Transverse colon (tissue), 4 donors: ENCODE measurements at regions of chr7 and their contacts with region 1.

Region 1: DNA sequence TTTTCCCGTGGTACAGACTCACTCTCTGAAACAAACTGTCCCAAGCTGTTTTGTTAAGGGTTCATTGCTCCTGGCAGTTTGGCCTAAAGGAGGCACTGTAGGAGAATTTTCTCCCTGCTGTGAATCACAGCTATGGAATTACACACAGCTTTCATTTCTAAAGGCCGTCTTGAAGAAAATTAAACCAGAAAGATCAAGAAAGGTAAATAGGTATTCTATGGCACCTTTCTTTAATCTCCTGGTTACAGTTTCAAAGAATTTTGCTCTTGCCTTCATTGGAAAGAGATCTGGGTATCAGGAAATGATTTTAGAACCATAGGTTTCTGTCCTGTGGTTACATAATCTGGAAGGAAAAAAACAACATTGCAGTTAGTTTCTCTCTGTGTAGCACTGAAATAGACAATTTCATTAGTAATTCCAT is 51.2 kb downstream of the PDK4 start:
- DNase-seq: peak; percentile 73
- H3K4me3 ChIP-seq: peak overlapping the region in 2 of 4 donors; percentile 12 to 44
- H3K27ac ChIP-seq: peak overlapping the region; percentile 85 to 94 (median 90)
- H3K4me1 ChIP-seq: peaks cover 20 to 58% (median 32%) of the 10 kb centered on the region in 4 donors
- H3K27me3 ChIP-seq: no peaks in the 10 kb centered on the region
- CTCF ChIP-seq: peak; percentile 58 to 82 (median 69)
- EP300 ChIP-seq: no peak
- POLR2A ChIP-seq: no peak

Region 2: DNA sequence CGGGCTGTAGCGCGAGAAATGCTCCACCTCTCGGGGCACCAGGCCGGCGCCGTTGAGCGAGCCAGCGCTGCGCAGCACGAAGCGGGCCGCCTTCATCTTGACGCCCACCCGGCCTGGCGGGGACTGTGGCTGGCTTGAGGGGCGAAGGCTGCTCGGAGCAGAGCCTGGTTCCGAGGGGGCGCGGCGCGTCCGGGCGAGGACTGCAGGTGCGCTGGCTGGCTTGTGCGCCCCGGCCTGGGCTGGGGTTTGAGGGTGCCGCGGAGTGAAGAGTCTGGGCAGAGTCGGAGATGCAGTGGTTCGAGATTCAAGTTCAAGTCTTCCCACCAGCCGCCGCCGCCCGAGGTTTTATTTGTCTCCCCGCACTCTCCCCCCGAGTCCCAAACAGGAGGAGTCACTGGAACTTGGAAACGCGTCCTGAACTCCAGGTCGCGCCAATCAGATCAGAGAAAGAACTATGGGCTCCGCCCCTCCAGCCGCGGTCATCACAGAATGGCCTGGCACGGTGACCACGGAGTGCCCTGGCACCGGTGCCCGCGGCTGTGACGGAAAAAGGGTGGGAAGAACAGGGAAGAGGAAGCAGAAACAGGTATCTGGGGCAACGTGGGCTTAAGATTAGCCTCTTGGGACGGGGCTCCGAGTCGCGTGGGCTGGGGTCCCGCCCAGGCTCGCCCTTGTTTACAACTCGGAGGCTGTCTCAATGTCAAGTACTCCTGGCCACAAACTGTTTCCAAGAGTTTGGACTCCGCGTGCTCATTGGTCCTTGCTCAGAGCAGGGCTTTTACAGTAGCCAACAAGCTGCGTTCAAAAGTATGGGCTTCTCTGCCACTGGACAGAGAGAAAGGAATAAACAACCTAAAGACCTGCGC is 51.3 kb after region 1 on chr7 and contains the start of gene PDK4:
- in situ Hi-C with region 1: no loop called
- intact Hi-C with region 1: loop called (anchors 5 kb)
- DNase-seq: peak; percentile 96
- H3K4me3 ChIP-seq: peak within 1 kb of the TSS; percentile 41 to 83 (median 73)
- H3K27ac ChIP-seq: peak within 1 kb of the TSS; percentile 95 to 96 (median 96)
- H3K4me1 ChIP-seq: peaks cover 0 to 17% (median 8%) of the 10 kb centered on the region in 4 donors
- H3K27me3 ChIP-seq: no peaks in the 10 kb centered on the region
- CTCF ChIP-seq: peak in 1 of 5 experiments; percentile 20
- EP300 ChIP-seq: peak; percentile 89
- POLR2A ChIP-seq: peak; percentile 95
- total RNA-seq, gene PDK4: 134 to 510 (median 273) TPM

Region 3: DNA sequence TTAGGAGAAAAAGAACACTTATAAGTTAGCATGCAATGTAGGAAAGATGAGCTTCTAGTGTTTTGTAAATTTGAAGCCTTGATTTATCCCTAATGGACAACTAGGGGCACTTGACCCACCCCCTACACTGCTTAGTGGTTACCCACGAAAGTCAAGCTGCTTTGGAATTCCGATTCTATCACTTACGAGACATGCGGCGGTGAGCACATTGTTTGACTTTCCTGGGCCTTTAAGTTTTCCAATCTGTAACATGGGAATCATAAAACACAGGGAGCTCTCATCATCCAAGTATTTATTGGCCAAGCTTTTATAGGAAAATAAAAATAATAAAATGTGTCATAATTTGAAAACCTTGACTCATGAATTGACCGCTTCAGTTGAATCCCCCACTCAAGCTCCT is 129.9 kb after region 1 on chr7:
- in situ Hi-C with region 1: loop called in 3 of 4 experiments (anchors 5 to 10 kb)
- intact Hi-C with region 1: no loop called
- DNase-seq: no peak
- H3K4me3 ChIP-seq: no peak overlapping the region
- H3K27ac ChIP-seq: no peak overlapping the region
- H3K4me1 ChIP-seq: peaks cover 0 to 9% (median 0%) of the 10 kb centered on the region in 4 donors
- H3K27me3 ChIP-seq: no peaks in the 10 kb centered on the region
- CTCF ChIP-seq: no peak
- EP300 ChIP-seq: no peak
- POLR2A ChIP-seq: no peak

Region 4: DNA sequence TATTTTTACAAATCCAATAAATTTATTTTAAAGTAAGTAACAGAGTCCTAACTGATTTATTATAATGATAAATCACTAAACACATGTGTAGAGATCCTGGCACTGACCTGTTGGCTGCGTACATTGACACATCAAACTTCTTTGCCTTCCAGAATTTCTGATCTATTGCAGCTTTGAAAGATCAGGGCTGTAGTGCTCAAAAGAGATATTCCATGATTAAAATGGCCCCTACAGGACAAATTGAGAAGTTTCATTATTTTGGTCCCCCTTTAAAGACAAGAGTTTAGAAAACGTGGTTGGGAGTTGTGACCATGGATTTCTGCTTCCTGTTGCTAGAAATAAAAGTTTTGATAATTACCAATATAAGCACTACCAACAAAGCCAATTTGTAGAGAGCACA is 138.9 kb after region 1 on chr7:
- in situ Hi-C with region 1: loop called in 3 of 4 experiments (anchors 5 to 10 kb)
- intact Hi-C with region 1: loop called (anchors 2 kb)
- DNase-seq: no peak
- H3K4me3 ChIP-seq: no peak overlapping the region
- H3K27ac ChIP-seq: peak overlapping the region in 2 of 4 donors; percentile 11 to 42
- H3K4me1 ChIP-seq: peaks cover 0 to 12% (median 5%) of the 10 kb centered on the region in 4 donors
- H3K27me3 ChIP-seq: no peaks in the 10 kb centered on the region
- CTCF ChIP-seq: peak; percentile 49 to 83 (median 63)
- EP300 ChIP-seq: no peak
- POLR2A ChIP-seq: no peak

Region 5: GRCh38 chr7:95690367-95690947 is 145.4 kb after region 1 on chr7:
- in situ Hi-C with region 1: loop called in 2 of 4 experiments (anchors 10 kb)
- intact Hi-C with region 1: loop called (anchors 2 kb)
- DNase-seq: no peak
- H3K4me3 ChIP-seq: no peak overlapping the region
- H3K27ac ChIP-seq: no peak overlapping the region
- H3K4me1 ChIP-seq: peaks cover 0 to 6% (median 0%) of the 10 kb centered on the region in 4 donors
- H3K27me3 ChIP-seq: peaks cover 15% of the 10 kb centered on the region
- CTCF ChIP-seq: peak; percentile 53 to 79 (median 64)
- EP300 ChIP-seq: no peak
- POLR2A ChIP-seq: no peak

Region 6: GRCh38 chr7:97006036-97006815 is 1461.1 kb after region 1 on chr7:
- in situ Hi-C with region 1: no loop called
- intact Hi-C with region 1: no loop called
- DNase-seq: no peak
- H3K4me3 ChIP-seq: peak overlapping the region in 3 of 4 donors; percentile 29 to 46 (median 31)
- H3K27ac ChIP-seq: no peak overlapping the region
- H3K4me1 ChIP-seq: peaks cover 0 to 40% (median 19%) of the 10 kb centered on the region in 4 donors
- H3K27me3 ChIP-seq: peaks cover 100% of the 10 kb centered on the region
- CTCF ChIP-seq: no peak
- EP300 ChIP-seq: no peak
- POLR2A ChIP-seq: no peak